ENCODE measurements at regions of chr11 and their contacts with region 1.

Region 1: DNA sequence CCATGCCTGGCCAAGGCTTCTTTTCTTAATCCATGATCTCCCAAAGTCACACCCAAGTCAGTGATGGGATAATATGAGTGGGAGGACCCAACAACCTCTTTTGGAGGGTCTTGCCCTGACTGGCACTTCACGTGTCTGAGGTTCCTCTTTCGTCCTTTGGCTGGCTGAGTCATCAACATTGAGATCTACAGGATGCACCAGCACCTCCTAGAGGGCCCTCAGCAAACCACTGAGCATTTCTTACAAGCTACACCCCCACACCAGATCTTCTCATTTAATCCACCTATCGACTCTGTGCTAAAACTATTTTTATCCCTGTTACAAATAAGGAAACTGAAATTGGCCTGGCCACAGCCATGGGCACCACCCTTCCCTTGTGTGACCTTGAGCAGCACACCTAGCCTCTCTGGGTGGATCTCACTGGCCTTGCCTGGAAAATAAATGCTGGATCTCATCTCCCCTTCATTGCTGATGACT is 63.4 kb downstream of the FLI1 start:
- DNase-seq: no peak
- H3K4me3 ChIP-seq: no peak overlapping the region
- H3K27ac ChIP-seq: no peak overlapping the region
- H3K4me1 ChIP-seq: peaks cover 0 to 3% (median 0%) of the 10 kb centered on the region in 4 experiments; a peak in 1 of 7 replicates
- H3K27me3 ChIP-seq: no peaks in the 10 kb centered on the region; a peak in 1 of 7 replicates
- CTCF ChIP-seq: peak; percentile 41 to 79 (median 64)
- EP300 ChIP-seq: no peak
- POLR2A ChIP-seq: no peak
- RAD21 ChIP-seq: peak; percentile 75 to 81

Region 2: DNA sequence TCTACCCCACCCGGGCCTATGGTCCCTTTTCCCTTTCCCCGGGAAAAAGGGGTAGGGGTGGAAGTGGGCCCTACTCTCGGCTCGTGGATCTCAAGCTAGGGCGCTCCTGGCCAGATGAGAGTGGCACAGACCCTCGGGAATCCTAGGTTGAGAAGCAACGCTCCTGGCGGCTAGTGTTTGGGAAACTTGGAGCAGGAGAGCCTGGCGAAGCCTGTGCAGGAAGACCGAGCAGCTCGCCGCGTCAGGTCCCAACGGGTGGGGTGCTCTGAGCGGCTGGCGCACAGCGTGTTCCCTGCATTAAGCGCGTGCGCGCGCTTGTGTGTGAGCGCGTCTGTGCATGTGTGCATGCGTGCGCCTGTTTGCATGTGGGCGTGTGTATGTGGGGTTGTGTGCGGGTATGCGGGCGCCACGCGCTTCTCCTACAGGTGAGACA is 70.5 kb before region 1 on chr11:
- CTCF ChIA-PET with region 1: interaction called, 12 read pairs
- POLR2A ChIA-PET with region 1: no interaction called
- DNase-seq: peak in 1 of 2 experiments; percentile 71
- H3K4me3 ChIP-seq: peak overlapping the region; percentile 20 to 60 (median 42); a peak in 7 of 8 replicates
- H3K27ac ChIP-seq: no peak overlapping the region
- H3K4me1 ChIP-seq: peaks cover 12 to 50% (median 31%) of the 10 kb centered on the region in 4 experiments
- H3K27me3 ChIP-seq: peaks cover 81 to 100% (median 98%) of the 10 kb centered on the region in 4 experiments
- CTCF ChIP-seq: no peak
- EP300 ChIP-seq: no peak
- POLR2A ChIP-seq: no peak
- RAD21 ChIP-seq: no peak

Region 3: GRCh38 chr11:128735935-128736605 is 21.2 kb before region 1 on chr11:
- CTCF ChIA-PET with region 1: interaction called, 16 read pairs
- POLR2A ChIA-PET with region 1: interaction called, 3 read pairs
- DNase-seq: no peak
- H3K4me3 ChIP-seq: no peak overlapping the region
- H3K27ac ChIP-seq: no peak overlapping the region
- H3K4me1 ChIP-seq: peaks cover 7 to 17% (median 16%) of the 10 kb centered on the region in 4 experiments; a peak in 5 of 7 replicates
- H3K27me3 ChIP-seq: peaks cover 0 to 2% (median 0%) of the 10 kb centered on the region in 4 experiments; a peak in 2 of 7 replicates
- CTCF ChIP-seq: no peak
- EP300 ChIP-seq: no peak
- POLR2A ChIP-seq: no peak
- RAD21 ChIP-seq: no peak

Region 4: GRCh38 chr11:128745311-128746136 is 11.7 kb before region 1 on chr11:
- CTCF ChIA-PET with region 1: interaction called, 11 read pairs
- POLR2A ChIA-PET with region 1: interaction called, 3 read pairs
- DNase-seq: no peak
- H3K4me3 ChIP-seq: no peak overlapping the region
- H3K27ac ChIP-seq: no peak overlapping the region
- H3K4me1 ChIP-seq: peaks cover 0 to 4% (median 2%) of the 10 kb centered on the region in 4 experiments; a peak in 4 of 7 replicates
- H3K27me3 ChIP-seq: peaks cover 0 to 3% (median 0%) of the 10 kb centered on the region in 4 experiments; a peak in 3 of 7 replicates
- CTCF ChIP-seq: no peak
- EP300 ChIP-seq: no peak
- POLR2A ChIP-seq: no peak
- RAD21 ChIP-seq: peak in 1 of 2 experiments; percentile 17; a peak in 1 of 4 replicates